GM12878 (cell line): ENCODE measurements at regions of chr4 and their contacts with region 1.

Region 1: DNA sequence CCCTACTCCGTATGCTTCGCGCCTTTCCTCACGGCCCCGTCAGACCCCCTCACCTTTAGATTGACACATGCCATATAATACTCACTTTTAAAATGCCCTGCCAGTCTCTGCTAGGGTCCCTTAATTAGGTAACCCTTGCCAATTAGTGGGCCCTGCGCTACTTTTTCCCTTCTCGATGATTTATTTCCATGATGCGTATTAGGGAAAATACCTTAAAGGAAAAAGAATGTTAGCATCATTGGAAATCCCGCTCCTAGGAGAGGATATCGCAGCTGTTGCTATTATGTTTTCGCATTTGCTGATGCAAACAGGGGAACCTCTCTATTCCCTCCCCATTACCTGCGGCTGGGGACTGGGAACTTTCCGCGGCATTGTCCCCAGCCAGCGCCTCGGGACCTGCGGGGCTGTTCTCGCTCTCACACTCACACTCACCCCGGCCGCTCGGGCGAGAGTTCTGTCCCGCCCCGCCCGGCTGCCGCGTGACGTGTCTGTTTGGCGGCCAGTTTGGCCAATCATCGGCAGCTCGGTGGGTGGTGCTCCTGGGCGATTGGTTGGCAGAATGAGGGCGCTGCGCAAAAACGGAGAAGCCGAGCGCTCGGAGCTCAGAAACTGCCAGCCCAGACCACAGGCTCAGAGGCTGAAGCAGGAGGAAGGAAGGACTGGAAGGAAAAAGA is at the start of gene PCDH10:
- DNase-seq: no peak
- ATAC-seq: peak; percentile 58
- H3K4me3 ChIP-seq: no peak within 1 kb of the TSS
- H3K27ac ChIP-seq: no peak within 1 kb of the TSS
- H3K4me1 ChIP-seq: no peaks in the 10 kb centered on the region
- H3K27me3 ChIP-seq: peaks cover 9 to 18% of the 10 kb centered on the region in 2 experiments
- CTCF ChIP-seq: no peak
- EP300 ChIP-seq: no peak
- POLR2A ChIP-seq: no peak
- RAD21 ChIP-seq: no peak
- polyA plus RNA-seq, gene PCDH10: under 0.01 to 0.02 TPM

Region 2: DNA sequence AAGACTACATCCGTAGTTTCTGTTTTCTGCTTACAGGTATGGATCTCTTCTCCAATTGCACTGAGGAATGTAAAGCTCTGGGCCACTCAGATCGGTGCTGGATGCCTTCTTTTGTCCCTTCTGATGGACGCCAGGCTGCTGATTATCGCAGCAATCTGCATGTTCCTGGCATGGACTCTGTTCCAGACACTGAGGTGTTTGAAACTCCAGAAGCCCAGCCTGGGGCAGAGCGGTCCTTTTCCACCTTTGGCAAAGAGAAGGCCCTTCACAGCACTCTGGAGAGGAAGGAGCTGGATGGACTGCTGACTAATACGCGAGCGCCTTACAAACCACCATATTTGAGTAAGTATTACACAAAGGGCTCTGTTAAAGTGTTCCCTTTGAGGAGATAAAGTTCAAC is 14.1 kb after region 1 on chr4:
- CTCF ChIA-PET with region 1: interaction called, 12 read pairs
- POLR2A ChIA-PET with region 1: no interaction called
- RAD21 ChIA-PET with region 1: interaction called, 12 read pairs
- SMC1A ChIA-PET with region 1: interaction called, 6 read pairs
- in situ Hi-C with region 1: no loop called
- intact Hi-C with region 1: no loop called
- DNase-seq: no peak
- ATAC-seq: no peak; the same call in 2 of the 3 replicates
- H3K4me3 ChIP-seq: no peak overlapping the region
- H3K27ac ChIP-seq: no peak overlapping the region
- H3K4me1 ChIP-seq: no peaks in the 10 kb centered on the region
- H3K27me3 ChIP-seq: no peaks in the 10 kb centered on the region
- CTCF ChIP-seq: no peak
- EP300 ChIP-seq: no peak
- POLR2A ChIP-seq: no peak
- RAD21 ChIP-seq: no peak

Region 3: GRCh38 chr4:133278591-133278990 is 129.8 kb after region 1 on chr4:
- CTCF ChIA-PET with region 1: no interaction called
- POLR2A ChIA-PET with region 1: no interaction called
- RAD21 ChIA-PET with region 1: no interaction called
- SMC1A ChIA-PET with region 1: no interaction called
- in situ Hi-C with region 1: no loop called
- intact Hi-C with region 1: no loop called
- DNase-seq: no peak
- ATAC-seq: no peak
- H3K4me3 ChIP-seq: no peak overlapping the region
- H3K27ac ChIP-seq: no peak overlapping the region
- H3K4me1 ChIP-seq: no peaks in the 10 kb centered on the region
- H3K27me3 ChIP-seq: no peaks in the 10 kb centered on the region; a peak in 1 of 4 replicates
- CTCF ChIP-seq: no peak
- EP300 ChIP-seq: no peak
- POLR2A ChIP-seq: no peak
- RAD21 ChIP-seq: no peak

Region 4: GRCh38 chr4:133483600-133484246 is 334.9 kb after region 1 on chr4:
- CTCF ChIA-PET with region 1: interaction called, 6 read pairs
- POLR2A ChIA-PET with region 1: no interaction called
- RAD21 ChIA-PET with region 1: interaction called, 5 read pairs
- SMC1A ChIA-PET with region 1: interaction called, 3 read pairs
- in situ Hi-C with region 1: no loop called
- intact Hi-C with region 1: loop called (anchors 5 kb)
- DNase-seq: no peak
- ATAC-seq: no peak
- H3K4me3 ChIP-seq: no peak overlapping the region
- H3K27ac ChIP-seq: no peak overlapping the region
- H3K4me1 ChIP-seq: no peaks in the 10 kb centered on the region
- H3K27me3 ChIP-seq: no peaks in the 10 kb centered on the region
- CTCF ChIP-seq: peak in 1 of 3 experiments; percentile 18; a peak in 1 of 6 replicates
- EP300 ChIP-seq: no peak
- POLR2A ChIP-seq: no peak
- RAD21 ChIP-seq: 0 out of 2 replicates have a peak, but pooled peaks have one; percentile 14

Region 5: GRCh38 chr4:134906404-134907023 is 1757.7 kb after region 1 on chr4:
- CTCF ChIA-PET with region 1: interaction called, 3 read pairs
- POLR2A ChIA-PET with region 1: no interaction called
- RAD21 ChIA-PET with region 1: no interaction called
- SMC1A ChIA-PET with region 1: no interaction called
- in situ Hi-C with region 1: no loop called
- intact Hi-C with region 1: loop called (anchors 5 kb)
- DNase-seq: no peak
- ATAC-seq: peak; percentile 72
- H3K4me3 ChIP-seq: no peak overlapping the region
- H3K27ac ChIP-seq: no peak overlapping the region
- H3K4me1 ChIP-seq: no peaks in the 10 kb centered on the region
- H3K27me3 ChIP-seq: no peaks in the 10 kb centered on the region
- CTCF ChIP-seq: peak in 2 of 3 experiments; percentile 15 to 34; a peak in 2 of 6 replicates
- EP300 ChIP-seq: no peak
- POLR2A ChIP-seq: no peak
- RAD21 ChIP-seq: peak; percentile 27; the same call in 1 of the 2 replicates

Region 6: DNA sequence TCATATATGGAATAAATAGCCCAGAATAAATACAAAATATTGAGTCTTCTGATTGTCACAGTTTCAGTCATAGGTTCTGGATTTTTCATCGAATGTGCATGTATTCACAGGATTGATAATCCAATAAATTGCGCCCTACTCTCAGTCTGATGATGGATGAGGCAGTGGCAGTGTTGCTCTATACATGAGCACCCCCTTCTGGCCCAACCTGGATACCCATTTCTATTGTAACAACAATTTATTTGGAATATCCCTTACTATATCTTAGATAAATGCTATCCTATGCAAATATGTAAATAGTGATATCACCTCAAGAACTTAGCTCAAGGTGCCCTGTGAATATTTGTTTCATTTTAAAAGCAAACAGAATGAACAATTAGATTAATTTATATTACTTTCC is 1786.5 kb after region 1 on chr4:
- CTCF ChIA-PET with region 1: no interaction called
- POLR2A ChIA-PET with region 1: no interaction called
- RAD21 ChIA-PET with region 1: no interaction called
- SMC1A ChIA-PET with region 1: no interaction called
- in situ Hi-C with region 1: loop called (anchors 25 kb)
- intact Hi-C with region 1: no loop called
- DNase-seq: no peak
- ATAC-seq: peak; percentile 55; the same call in 2 of the 3 replicates
- H3K4me3 ChIP-seq: no peak overlapping the region
- H3K27ac ChIP-seq: no peak overlapping the region
- H3K4me1 ChIP-seq: no peaks in the 10 kb centered on the region
- H3K27me3 ChIP-seq: no peaks in the 10 kb centered on the region
- CTCF ChIP-seq: peak; percentile 21 to 41 (median 22); a peak in 4 of 6 replicates
- EP300 ChIP-seq: no peak
- POLR2A ChIP-seq: no peak
- RAD21 ChIP-seq: peak; percentile 51